ENCODE measurements at regions of chr9 and their contacts with region 1.

Region 1: GRCh38 chr9:38107811-38108304 is 38.8 kb upstream of the SHB start:
- DNase-seq: no peak
- H3K4me3 ChIP-seq: no peak overlapping the region
- H3K27ac ChIP-seq: no peak overlapping the region
- H3K4me1 ChIP-seq: no peaks in the 10 kb centered on the region
- H3K27me3 ChIP-seq: no peaks in the 10 kb centered on the region
- CTCF ChIP-seq: no peak

Region 2: DNA sequence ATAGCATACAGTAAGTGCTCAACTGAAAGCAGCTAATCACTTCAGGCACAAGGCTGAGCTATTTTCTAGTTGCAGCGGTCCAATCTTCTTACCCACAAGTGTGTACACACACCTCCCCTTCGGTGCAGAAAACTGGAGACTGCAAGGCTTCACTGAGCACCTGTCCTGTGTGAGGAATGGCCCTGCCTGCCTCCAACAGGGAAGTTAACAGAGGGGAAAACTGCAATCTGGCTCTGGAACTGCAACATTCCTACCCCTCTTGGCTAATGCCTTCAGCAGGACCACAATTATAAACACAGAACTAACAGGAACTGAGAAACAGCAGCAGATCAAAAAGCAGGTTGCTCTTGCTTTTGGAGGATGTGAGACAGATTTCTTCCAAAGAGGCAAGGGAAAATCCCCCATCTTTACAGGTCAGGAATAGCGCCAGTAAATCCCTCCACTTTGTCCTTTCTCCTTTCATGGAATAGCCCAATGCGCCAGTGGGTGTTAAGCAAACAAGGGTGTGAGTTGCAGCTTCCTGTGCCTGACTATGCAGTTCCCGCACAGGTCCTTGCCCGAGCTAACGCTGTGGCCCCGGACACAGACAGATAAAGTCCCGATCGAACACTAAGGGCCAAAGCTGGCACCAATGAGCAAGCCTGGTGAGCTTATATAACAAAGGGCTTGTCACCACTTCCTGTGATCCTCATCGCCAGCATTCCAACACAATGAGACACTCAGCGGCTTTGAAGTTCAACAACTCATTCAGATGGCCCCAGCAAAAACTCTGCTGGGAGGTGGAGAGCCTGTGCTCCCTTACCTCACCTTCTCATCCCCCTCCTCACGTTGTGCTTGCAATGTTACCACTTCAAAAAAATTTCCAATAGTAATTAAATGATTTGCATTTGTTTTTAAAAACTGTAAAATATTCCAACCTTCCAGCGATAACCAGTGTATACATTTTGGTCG is 60.3 kb before region 1 on chr9:
- CTCF ChIA-PET with region 1: no interaction called
- POLR2A ChIA-PET with region 1: no interaction called
- intact Hi-C with region 1: loop called (anchors 10 kb)
- DNase-seq: peak; percentile 93
- H3K4me3 ChIP-seq: no peak overlapping the region
- H3K27ac ChIP-seq: peak overlapping the region; percentile 57
- H3K4me1 ChIP-seq: peaks cover 18% of the 10 kb centered on the region
- H3K27me3 ChIP-seq: no peaks in the 10 kb centered on the region
- CTCF ChIP-seq: no peak

Region 3: GRCh38 chr9:38208206-38208901 is 100.5 kb after region 1 on chr9:
- CTCF ChIA-PET with region 1: no interaction called
- POLR2A ChIA-PET with region 1: no interaction called
- intact Hi-C with region 1: no loop called
- DNase-seq: no peak
- H3K4me3 ChIP-seq: no peak overlapping the region
- H3K27ac ChIP-seq: no peak overlapping the region
- H3K4me1 ChIP-seq: no peaks in the 10 kb centered on the region
- H3K27me3 ChIP-seq: no peaks in the 10 kb centered on the region
- CTCF ChIP-seq: no peak

Measured in A673 (cell line).